ENCODE measurements at regions of chr17 and their contacts with region 1.

Region 1: DNA sequence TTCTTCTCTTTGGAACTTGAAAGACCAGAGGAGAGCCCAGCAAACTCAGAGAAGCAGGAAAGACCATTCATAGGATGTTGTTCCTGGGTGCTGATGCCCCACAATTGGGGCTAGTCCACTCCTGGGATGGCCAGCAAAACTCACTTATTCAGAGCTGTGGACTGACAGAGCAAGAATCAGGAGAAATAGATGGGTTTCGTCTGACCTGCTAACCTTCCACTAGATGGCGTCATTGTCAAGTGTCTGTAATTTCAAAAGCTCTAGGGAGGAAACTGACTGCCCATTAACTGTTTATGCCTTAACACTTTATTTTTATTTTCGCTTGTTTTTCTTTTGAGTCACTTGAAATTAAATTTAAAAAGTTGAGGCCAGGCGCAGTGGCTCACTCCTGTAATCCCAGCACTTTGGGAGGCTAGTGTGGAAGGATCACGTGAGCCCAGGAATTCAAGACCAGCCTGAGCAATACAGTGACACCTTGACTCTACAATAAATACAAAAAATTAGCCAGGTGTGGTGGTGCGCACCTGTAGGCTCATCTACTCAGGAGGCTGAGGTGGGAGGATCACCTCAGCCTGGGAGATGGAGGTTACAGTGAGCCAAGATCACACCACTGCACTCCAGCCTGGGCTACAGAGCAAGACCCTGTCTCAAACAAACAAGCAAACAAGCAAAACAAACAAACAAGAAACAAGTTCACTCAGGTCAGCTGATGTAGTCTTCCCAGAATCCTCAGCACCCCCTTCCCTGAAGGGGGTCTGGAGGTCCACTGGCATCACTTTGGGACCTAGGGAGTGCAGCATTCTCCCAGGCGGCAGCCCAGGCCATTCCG is 28.6 kb upstream of the MILR1 start:
- DNase-seq: peak in 1 of 5 donors; percentile 43
- ATAC-seq: peak; percentile 71 to 86 (median 79)
- H3K4me3 ChIP-seq: no peak overlapping the region
- H3K27ac ChIP-seq: no peak overlapping the region
- H3K4me1 ChIP-seq: peaks cover 0 to 18% (median 4%) of the 10 kb centered on the region in 12 donors
- H3K27me3 ChIP-seq: no peaks in the 10 kb centered on the region
- CTCF ChIP-seq: peak; percentile 67 to 86 (median 78)
- POLR2A ChIP-seq: no peak

Region 2: GRCh38 chr17:64129764-64130558 is 290.4 kb before region 1 on chr17 and contains the start of gene ERN1:
- intact Hi-C with region 1: loop called in 1 of 10 experiments (anchors 10 kb)
- DNase-seq: peak; percentile 95 to 97 (median 95)
- ATAC-seq: peak; percentile 96 to 98 (median 97)
- H3K4me3 ChIP-seq: peak within 1 kb of the TSS; percentile 69 to 94 (median 85)
- H3K27ac ChIP-seq: peak within 1 kb of the TSS; percentile 90 to 98 (median 96)
- H3K4me1 ChIP-seq: peaks cover 0 to 54% (median 22%) of the 10 kb centered on the region in 12 donors
- H3K27me3 ChIP-seq: no peaks in the 10 kb centered on the region
- CTCF ChIP-seq: peak in 3 of 12 donors; percentile 4 to 15 (median 13)
- POLR2A ChIP-seq: peak; percentile 13 to 90
- total RNA-seq, gene ERN1: 5.1 to 18.7 (median 9.1) TPM

Region 3: GRCh38 chr17:64320613-64321553 is 99.5 kb before region 1 on chr17:
- intact Hi-C with region 1: loop called in 8 of 10 experiments (anchors 1 to 5 kb)
- DNase-seq: peak in 4 of 5 donors; percentile 59 to 78 (median 70)
- ATAC-seq: peak; percentile 44 to 86 (median 74)
- H3K4me3 ChIP-seq: peak overlapping the region in 1 of 12 donors; percentile 1
- H3K27ac ChIP-seq: peak overlapping the region in 10 of 12 donors; percentile 2 to 63 (median 36)
- H3K4me1 ChIP-seq: peaks cover 0 to 60% (median 19%) of the 10 kb centered on the region in 12 donors
- H3K27me3 ChIP-seq: no peaks in the 10 kb centered on the region
- CTCF ChIP-seq: peak; percentile 69 to 83 (median 77)
- POLR2A ChIP-seq: no peak

Region 4: GRCh38 chr17:64491034-64491859 is 70.9 kb after region 1 on chr17:
- intact Hi-C with region 1: loop called (anchors 2 to 5 kb)
- DNase-seq: peak in 1 of 5 donors; percentile 29
- ATAC-seq: peak in 1 of 4 donors; percentile 61
- H3K4me3 ChIP-seq: no peak overlapping the region
- H3K27ac ChIP-seq: no peak overlapping the region
- H3K4me1 ChIP-seq: peaks cover 2 to 43% (median 17%) of the 10 kb centered on the region in 12 donors
- H3K27me3 ChIP-seq: no peaks in the 10 kb centered on the region
- CTCF ChIP-seq: peak; percentile 22 to 67 (median 49)
- POLR2A ChIP-seq: no peak

Region 5: GRCh38 chr17:64635647-64636307 is 215.4 kb after region 1 on chr17:
- intact Hi-C with region 1: loop called in 2 of 10 experiments (anchors 10 kb)
- DNase-seq: no peak
- ATAC-seq: no peak
- H3K4me3 ChIP-seq: no peak overlapping the region
- H3K27ac ChIP-seq: peak overlapping the region in 1 of 12 donors; percentile 12
- H3K4me1 ChIP-seq: peaks cover 0 to 49% (median 6%) of the 10 kb centered on the region in 12 donors
- H3K27me3 ChIP-seq: no peaks in the 10 kb centered on the region
- CTCF ChIP-seq: no peak
- POLR2A ChIP-seq: no peak

Region 6: DNA sequence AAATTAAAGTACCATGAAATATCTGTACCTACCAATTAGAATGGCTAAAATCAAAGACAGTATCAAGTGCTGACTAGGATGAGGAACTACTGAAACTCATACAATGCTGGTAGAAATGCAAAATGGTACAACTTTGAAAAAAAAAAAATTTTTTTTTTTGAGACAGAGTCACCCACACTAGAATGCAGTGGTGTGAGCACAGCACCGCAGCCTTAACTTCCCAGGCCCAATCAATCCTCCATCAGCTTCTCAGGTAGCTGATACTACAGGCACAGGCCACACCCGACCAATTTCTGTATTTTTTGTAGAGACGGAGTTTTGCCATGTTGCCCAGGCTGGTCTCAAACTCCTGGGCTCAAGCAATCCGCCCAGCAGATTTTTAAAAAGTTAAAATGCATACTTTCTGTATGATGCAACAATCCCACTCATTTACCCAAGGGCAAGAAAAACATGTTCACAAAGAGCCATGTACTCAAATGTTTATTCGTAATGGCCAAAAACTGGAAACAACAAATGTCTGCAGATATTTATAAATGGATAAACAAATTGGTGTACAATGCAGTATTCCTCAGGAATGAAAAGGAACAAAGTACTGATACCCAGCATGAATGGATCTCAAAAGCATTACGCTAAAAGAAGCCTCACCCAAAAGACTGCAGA is 233.1 kb after region 1 on chr17:
- intact Hi-C with region 1: loop called in 5 of 10 experiments (anchors 1 to 10 kb)
- DNase-seq: no peak
- ATAC-seq: no peak
- H3K4me3 ChIP-seq: no peak overlapping the region
- H3K27ac ChIP-seq: no peak overlapping the region
- H3K4me1 ChIP-seq: peaks cover 0 to 52% (median 6%) of the 10 kb centered on the region in 12 donors
- H3K27me3 ChIP-seq: no peaks in the 10 kb centered on the region
- CTCF ChIP-seq: no peak
- POLR2A ChIP-seq: no peak